MCF 10A (cell line): ENCODE measurements at regions of chr15 and their contacts with region 1.

Region 1: GRCh38 chr15:41806291-41807181 is 21.4 kb upstream of the JMJD7 start:
- DNase-seq: peak; percentile 94
- H3K4me3 Mint-ChIP-seq: no peak overlapping the region
- H3K27ac Mint-ChIP-seq: peak overlapping the region; percentile 99
- H3K4me1 Mint-ChIP-seq: peaks cover 30% of the 10 kb centered on the region
- H3K27me3 Mint-ChIP-seq: no peaks in the 10 kb centered on the region
- CTCF ChIP-seq: peak; percentile 20

Region 2: GRCh38 chr15:40660686-40661085 is 1145.8 kb before region 1 on chr15:
- CTCF ChIA-PET with region 1: no interaction called
- POLR2A ChIA-PET with region 1: no interaction called
- intact Hi-C with region 1: no loop called
- DNase-seq: no peak
- H3K4me3 Mint-ChIP-seq: no peak overlapping the region
- H3K27ac Mint-ChIP-seq: no peak overlapping the region
- H3K4me1 Mint-ChIP-seq: no peaks in the 10 kb centered on the region
- H3K27me3 Mint-ChIP-seq: no peaks in the 10 kb centered on the region
- CTCF ChIP-seq: no peak

Region 3: GRCh38 chr15:41779662-41780157 is 26.8 kb before region 1 on chr15:
- CTCF ChIA-PET with region 1: interaction called, 249 read pairs
- POLR2A ChIA-PET with region 1: interaction called, 486 read pairs
- intact Hi-C with region 1: loop called (anchors 1 kb)
- DNase-seq: no peak
- H3K4me3 Mint-ChIP-seq: no peak overlapping the region
- H3K27ac Mint-ChIP-seq: peak overlapping the region; percentile 74
- H3K4me1 Mint-ChIP-seq: peaks cover 53% of the 10 kb centered on the region
- H3K27me3 Mint-ChIP-seq: no peaks in the 10 kb centered on the region
- CTCF ChIP-seq: no peak

Region 4: DNA sequence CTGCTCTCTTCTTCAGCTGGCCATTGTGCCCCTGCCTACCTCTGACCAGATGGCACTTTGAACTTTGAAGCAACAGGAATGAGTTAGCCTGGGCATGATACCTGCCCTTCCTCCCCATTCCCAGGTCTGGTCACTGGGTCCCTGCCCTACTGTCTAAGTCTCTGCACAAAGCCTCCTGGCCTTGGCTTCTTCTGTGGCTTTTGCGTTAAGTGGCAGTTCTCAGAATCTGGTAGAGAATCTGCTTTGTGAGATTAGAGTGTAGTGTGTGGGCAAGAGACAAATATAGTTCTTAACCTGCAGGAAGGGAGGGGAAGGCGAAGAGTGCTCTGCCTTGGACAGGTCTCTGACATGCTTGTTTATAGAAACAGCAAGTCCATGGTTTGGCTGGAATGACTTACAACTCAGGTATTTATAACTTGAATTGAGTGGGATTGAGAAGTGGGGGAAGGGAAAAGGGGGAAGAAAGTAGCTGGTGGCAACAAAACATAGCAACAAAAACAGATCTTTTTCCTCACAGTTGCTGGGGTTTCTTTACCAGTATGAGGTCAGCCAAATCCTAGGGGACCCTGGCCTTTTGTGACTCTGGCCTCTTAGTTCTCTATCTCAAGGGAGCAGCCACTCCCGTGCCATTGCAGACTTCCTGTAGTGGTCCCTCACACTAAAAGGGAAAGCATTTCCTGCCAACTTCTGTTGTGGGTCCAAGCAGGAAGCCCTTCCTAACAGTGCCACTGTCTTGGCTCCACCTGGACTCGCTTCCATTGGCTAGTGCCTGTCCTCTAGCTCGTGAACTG is 15.6 kb before region 1 on chr15:
- CTCF ChIA-PET with region 1: interaction called, 6 read pairs
- POLR2A ChIA-PET with region 1: interaction called, 24 read pairs
- intact Hi-C with region 1: no loop called
- DNase-seq: peak; percentile 58
- H3K4me3 Mint-ChIP-seq: peak overlapping the region; percentile 24
- H3K27ac Mint-ChIP-seq: peak overlapping the region; percentile 86
- H3K4me1 Mint-ChIP-seq: peaks cover 51% of the 10 kb centered on the region
- H3K27me3 Mint-ChIP-seq: no peaks in the 10 kb centered on the region
- CTCF ChIP-seq: no peak

Region 5: GRCh38 chr15:41795996-41796856 is 10.3 kb before region 1 on chr15:
- CTCF ChIA-PET with region 1: interaction called, 6 read pairs
- POLR2A ChIA-PET with region 1: interaction called, 24 read pairs
- intact Hi-C with region 1: no loop called
- DNase-seq: peak; percentile 48
- H3K4me3 Mint-ChIP-seq: peak overlapping the region; percentile 1
- H3K27ac Mint-ChIP-seq: peak overlapping the region; percentile 87
- H3K4me1 Mint-ChIP-seq: peaks cover 42% of the 10 kb centered on the region
- H3K27me3 Mint-ChIP-seq: no peaks in the 10 kb centered on the region
- CTCF ChIP-seq: no peak